Activated CD4-positive, alpha-beta T cell treated with anti-CD3 and anti-CD28 coated beads for 36 hours (primary cell): ENCODE measurements at regions of chr16 and their contacts with region 1.

Region 1: GRCh38 chr16:84096115-84097012 is 20.4 kb downstream of the MBTPS1 start:
- DNase-seq: no peak
- ATAC-seq: no peak
- H3K4me3 Mint-ChIP-seq: no peak overlapping the region
- H3K27ac Mint-ChIP-seq: no peak overlapping the region
- H3K4me1 Mint-ChIP-seq: peaks cover 21% of the 10 kb centered on the region
- H3K27me3 Mint-ChIP-seq: no peaks in the 10 kb centered on the region

Region 2: DNA sequence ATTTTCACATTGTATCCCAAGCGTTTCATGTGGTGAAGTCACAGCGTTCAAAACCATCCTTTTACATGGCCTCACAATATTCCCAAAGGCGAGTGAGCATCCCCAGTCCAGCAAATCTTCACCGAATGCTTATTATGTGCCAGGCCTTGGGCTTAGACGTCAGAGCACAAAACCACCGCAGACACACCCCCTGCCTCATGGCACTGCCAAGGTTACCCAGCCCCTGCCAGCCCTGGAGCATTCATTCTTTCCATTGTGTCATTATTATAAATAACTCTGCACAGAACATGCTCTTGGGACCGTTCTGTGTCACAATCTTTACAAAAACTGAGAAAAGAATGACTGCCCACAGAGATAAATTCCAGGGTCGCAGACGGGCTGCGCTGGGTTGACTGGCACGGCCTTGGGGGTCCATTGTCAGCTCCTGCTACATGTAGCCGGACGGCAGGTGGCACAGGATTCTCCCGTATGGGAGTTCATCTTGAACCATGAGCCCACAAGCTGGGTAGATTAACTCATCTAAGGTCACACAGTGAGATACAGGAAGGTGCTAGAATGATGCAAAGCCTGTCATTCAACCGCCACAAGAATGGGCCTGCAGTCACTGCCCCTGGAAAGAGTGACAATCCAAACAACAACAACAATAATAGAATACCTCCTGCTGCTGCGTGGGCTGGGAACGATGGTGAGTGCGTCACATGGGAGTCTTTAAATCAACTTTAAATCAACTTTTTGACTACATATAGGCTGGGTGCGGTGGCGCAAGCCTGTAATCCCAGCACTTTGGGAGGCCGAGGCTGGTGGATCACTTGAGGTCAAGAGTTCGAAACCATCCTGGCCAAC is 132.9 kb before region 1 on chr16:
- CTCF ChIA-PET with region 1: no interaction called
- POLR2A ChIA-PET with region 1: no interaction called
- intact Hi-C with region 1: no loop called
- DNase-seq: no peak
- ATAC-seq: no peak
- H3K4me3 Mint-ChIP-seq: no peak overlapping the region
- H3K27ac Mint-ChIP-seq: no peak overlapping the region
- H3K4me1 Mint-ChIP-seq: no peaks in the 10 kb centered on the region
- H3K27me3 Mint-ChIP-seq: peaks cover 3% of the 10 kb centered on the region

Region 3: GRCh38 chr16:84111525-84111924 is 15.2 kb after region 1 on chr16:
- CTCF ChIA-PET with region 1: interaction called, 14 read pairs
- POLR2A ChIA-PET with region 1: no interaction called
- intact Hi-C with region 1: loop called in 1 of 2 experiments (anchors 1 kb)
- DNase-seq: no peak
- ATAC-seq: no peak
- H3K4me3 Mint-ChIP-seq: no peak overlapping the region
- H3K27ac Mint-ChIP-seq: peak overlapping the region; percentile 42
- H3K4me1 Mint-ChIP-seq: peaks cover 56% of the 10 kb centered on the region
- H3K27me3 Mint-ChIP-seq: no peaks in the 10 kb centered on the region